ENCODE measurements at regions of chr2 and their contacts with region 1.

Region 1: DNA sequence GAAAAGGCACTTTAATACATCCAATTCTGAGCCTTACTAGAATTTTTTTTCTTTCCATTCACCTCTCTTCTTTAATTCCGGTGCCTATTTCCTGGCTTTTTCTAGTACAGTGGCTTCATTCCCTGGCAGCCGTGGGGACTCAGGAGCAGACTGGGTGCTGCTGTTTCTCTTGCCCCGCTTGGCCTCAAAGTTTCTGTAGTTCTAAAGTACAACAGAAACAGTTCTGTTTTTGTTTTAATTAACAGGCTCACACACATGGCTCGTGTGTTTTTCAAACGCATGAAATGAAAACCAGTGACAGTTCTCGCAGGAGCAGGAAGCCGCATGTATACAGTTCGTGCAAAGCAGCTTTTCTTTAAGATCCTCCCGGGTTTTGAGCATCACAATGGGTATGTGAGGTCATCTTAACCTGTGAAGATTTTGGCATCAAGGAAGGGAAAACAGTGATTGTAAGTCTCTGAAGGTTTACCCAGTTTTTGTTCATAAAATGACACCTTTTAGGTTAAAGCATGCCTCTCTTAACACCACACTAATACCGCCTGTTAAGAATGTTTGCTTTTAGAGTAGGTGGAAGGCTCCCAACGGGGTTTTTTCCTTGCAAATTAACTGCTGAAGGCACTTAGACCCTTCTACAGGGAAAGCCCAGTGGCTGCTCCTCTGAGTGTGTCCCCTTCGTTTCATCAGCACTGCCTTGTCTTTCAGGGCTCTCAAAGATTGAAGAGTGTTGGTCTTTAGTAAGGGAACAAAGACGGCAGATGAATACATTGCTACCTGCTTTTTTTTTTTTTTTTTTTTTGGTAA is 5.8 kb downstream of the FZD7 start:
- DNase-seq: no peak
- ATAC-seq: no peak

Region 2: DNA sequence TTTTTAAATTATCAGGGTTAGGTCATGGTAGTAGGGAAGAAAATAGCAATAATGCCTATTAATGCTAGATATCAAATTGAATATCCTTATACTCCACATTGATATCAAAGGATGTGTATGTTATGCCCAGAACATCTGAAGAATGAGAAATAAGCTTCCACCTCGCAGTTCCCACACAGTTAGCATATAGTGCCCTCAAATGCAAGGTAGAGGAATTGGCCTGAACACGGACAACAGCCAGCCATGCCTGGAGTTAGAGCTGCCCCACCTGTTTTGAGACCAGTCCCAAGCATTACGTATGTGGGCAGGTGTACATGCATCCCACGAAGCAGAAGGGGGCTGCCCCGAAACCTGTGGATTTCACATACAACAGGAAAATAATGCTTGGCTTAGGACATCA is 119.3 kb after region 1 on chr2:
- intact Hi-C with region 1: loop called (anchors 10 kb)
- DNase-seq: no peak
- ATAC-seq: peak; percentile 43

Region 3: GRCh38 chr2:202339071-202339870 is 299.8 kb after region 1 on chr2:
- intact Hi-C with region 1: no loop called
- DNase-seq: no peak
- ATAC-seq: no peak